PC-3 (cell line): ENCODE measurements at regions of chr1 and their contacts with region 1.

Region 1: DNA sequence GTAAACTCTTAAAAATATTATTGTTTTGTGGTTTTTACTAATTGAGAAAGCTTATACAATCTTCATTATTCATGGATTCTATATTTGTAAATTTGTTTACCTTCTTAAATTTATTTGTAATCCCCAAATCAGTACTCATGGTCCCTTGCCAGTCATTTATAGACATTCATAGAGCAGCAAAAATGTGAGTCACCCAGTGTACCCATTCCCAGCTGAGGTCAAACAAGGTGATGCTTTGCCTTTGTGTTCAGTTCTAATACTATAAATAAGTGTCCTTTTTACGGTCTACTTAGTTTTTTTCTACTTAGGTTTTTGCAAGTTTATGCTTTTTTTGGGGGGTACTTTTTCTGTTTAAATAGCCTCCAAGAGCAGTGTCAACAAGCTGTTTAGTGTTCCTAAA is 36.1 kb downstream of the SORT1 start:
- DNase-seq: peak; percentile 65
- ATAC-seq: peak; percentile 90
- H3K4me3 ChIP-seq: no peak overlapping the region
- H3K27ac ChIP-seq: no peak overlapping the region
- H3K4me1 ChIP-seq: peaks cover 14% of the 10 kb centered on the region
- H3K27me3 ChIP-seq: no peaks in the 10 kb centered on the region
- CTCF ChIP-seq: no peak

Region 2: DNA sequence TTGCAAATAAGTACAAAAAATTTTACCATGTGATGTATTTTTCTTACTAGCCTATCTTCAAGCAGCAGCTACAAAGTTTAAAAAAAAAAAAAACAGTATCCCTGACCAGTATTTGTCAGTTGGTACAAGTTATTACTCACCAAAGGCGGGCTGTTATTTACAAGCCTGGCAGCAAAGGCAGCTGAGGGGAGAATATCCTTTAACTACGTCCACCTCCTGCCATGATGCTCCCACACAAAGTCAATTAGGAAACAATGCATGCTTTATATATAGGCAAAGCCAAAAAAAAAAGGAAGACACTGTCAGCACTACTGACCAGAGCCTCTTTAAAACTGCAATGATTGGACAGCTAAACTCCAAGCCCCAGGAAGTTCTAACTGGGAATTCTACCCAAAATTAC is 50.9 kb after region 1 on chr1:
- CTCF ChIA-PET with region 1: no interaction called
- POLR2A ChIA-PET with region 1: interaction called, 17 read pairs
- intact Hi-C with region 1: no loop called
- DNase-seq: no peak
- ATAC-seq: peak; percentile 70
- H3K4me3 ChIP-seq: no peak overlapping the region
- H3K27ac ChIP-seq: no peak overlapping the region
- H3K4me1 ChIP-seq: no peaks in the 10 kb centered on the region
- H3K27me3 ChIP-seq: no peaks in the 10 kb centered on the region
- CTCF ChIP-seq: no peak